ENCODE measurements at regions of chr3 and their contacts with region 1.

Region 1: GRCh38 chr3:15205934-15206661 is at the start of gene CAPN7:
- DNase-seq: peak; percentile 94
- H3K4me3 Mint-ChIP-seq: peak within 1 kb of the TSS; percentile 91
- H3K27ac Mint-ChIP-seq: peak within 1 kb of the TSS; percentile 86
- H3K4me1 Mint-ChIP-seq: peaks cover 27% of the 10 kb centered on the region
- H3K27me3 Mint-ChIP-seq: peaks cover 1% of the 10 kb centered on the region
- total RNA-seq, gene CAPN7: 26.0 and 28.6 TPM in 2 replicates

Region 2: GRCh38 chr3:14947886-14948555 is 258.1 kb before region 1 on chr3:
- intact Hi-C with region 1: loop called (anchors 1 kb)
- DNase-seq: peak; percentile 95
- H3K4me3 Mint-ChIP-seq: peak overlapping the region; percentile 97
- H3K27ac Mint-ChIP-seq: peak overlapping the region; percentile 100
- H3K4me1 Mint-ChIP-seq: peaks cover 36% of the 10 kb centered on the region
- H3K27me3 Mint-ChIP-seq: no peaks in the 10 kb centered on the region

Region 3: GRCh38 chr3:15268033-15268631 is 62.0 kb after region 1 on chr3:
- intact Hi-C with region 1: loop called (anchors 1 kb)
- DNase-seq: peak; percentile 74
- H3K4me3 Mint-ChIP-seq: no peak overlapping the region
- H3K27ac Mint-ChIP-seq: no peak overlapping the region
- H3K4me1 Mint-ChIP-seq: peaks cover 73% of the 10 kb centered on the region
- H3K27me3 Mint-ChIP-seq: no peaks in the 10 kb centered on the region

Region 4: GRCh38 chr3:15405448-15406050 is 199.5 kb after region 1 on chr3:
- intact Hi-C with region 1: loop called (anchors 1 kb)
- DNase-seq: no peak
- H3K4me3 Mint-ChIP-seq: no peak overlapping the region
- H3K27ac Mint-ChIP-seq: no peak overlapping the region
- H3K4me1 Mint-ChIP-seq: peaks cover 6% of the 10 kb centered on the region
- H3K27me3 Mint-ChIP-seq: no peaks in the 10 kb centered on the region

Region 5: GRCh38 chr3:15601397-15602145 is 395.5 kb after region 1 on chr3 and contains the starts of genes BTD and HACL1:
- intact Hi-C with region 1: loop called (anchors 1 kb)
- DNase-seq: peak; percentile 97
- H3K4me3 Mint-ChIP-seq: peak within 1 kb of the TSS; percentile 99
- H3K27ac Mint-ChIP-seq: peak within 1 kb of the TSS; percentile 99
- H3K4me1 Mint-ChIP-seq: peaks cover 51% of the 10 kb centered on the region
- H3K27me3 Mint-ChIP-seq: no peaks in the 10 kb centered on the region
- total RNA-seq, gene BTD: 2.6 and 3.5 TPM in 2 replicates
- total RNA-seq, gene HACL1: 21.4 and 24.8 TPM in 2 replicates

Region 6: GRCh38 chr3:16048435-16049318 is 842.6 kb after region 1 on chr3:
- intact Hi-C with region 1: loop called (anchors 2 kb)
- DNase-seq: peak; percentile 23
- H3K4me3 Mint-ChIP-seq: no peak overlapping the region
- H3K27ac Mint-ChIP-seq: no peak overlapping the region
- H3K4me1 Mint-ChIP-seq: peaks cover 6% of the 10 kb centered on the region
- H3K27me3 Mint-ChIP-seq: no peaks in the 10 kb centered on the region

Measured in activated T-helper 1 cell treated with anti-CD3 and anti-CD28 coated beads, Interleukin-12 subunit alpha, Interleukin-12 subunit beta, Interleukin-2, Interleukin-4 antibody, amounts not matched to agents 30 ng/mL and 10 ng/mL and 1 ng/mL, durations not matched to agents 14 hours and 24 hours and 36 hours (primary cell).